PC-9 (cell line): ENCODE measurements at regions of chr5 and their contacts with region 1.

Region 1: GRCh38 chr5:59917121-59917520 is 23.6 kb upstream of the PDE4D start:
- DNase-seq: no peak
- H3K4me3 ChIP-seq: no peak overlapping the region
- H3K27ac ChIP-seq: no peak overlapping the region
- H3K4me1 ChIP-seq: no peaks in the 10 kb centered on the region
- H3K27me3 ChIP-seq: no peaks in the 10 kb centered on the region
- CTCF ChIP-seq: no peak

Region 2: DNA sequence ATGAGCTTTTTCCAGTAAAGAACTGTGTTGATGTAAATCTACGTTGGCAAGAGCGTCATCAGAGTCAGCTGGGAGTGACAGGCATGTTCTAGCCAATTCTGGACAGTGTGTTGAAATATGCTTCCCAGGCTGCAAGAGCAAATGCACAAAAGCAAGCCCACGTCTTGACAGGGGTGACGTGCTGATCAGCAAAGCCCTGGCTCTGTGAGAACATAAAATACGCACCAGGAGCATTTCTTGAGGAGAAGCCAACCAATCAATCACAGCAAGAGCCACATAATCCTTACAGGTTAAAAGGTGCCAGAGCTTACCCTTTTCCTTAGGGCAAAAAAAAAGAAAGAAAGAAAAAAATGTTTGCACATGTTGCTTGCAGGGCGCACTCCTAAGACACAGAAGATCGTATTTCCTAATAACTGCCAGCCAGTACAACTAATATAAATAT is 171.7 kb before region 1 on chr5:
- CTCF ChIA-PET with region 1: no interaction called
- POLR2A ChIA-PET with region 1: no interaction called
- intact Hi-C with region 1: no loop called
- DNase-seq: peak in 1 of 2 experiments; percentile 43
- H3K4me3 ChIP-seq: no peak overlapping the region
- H3K27ac ChIP-seq: peak overlapping the region; percentile 41; the same call in 1 of the 2 replicates
- H3K4me1 ChIP-seq: peaks cover 36% of the 10 kb centered on the region
- H3K27me3 ChIP-seq: no peaks in the 10 kb centered on the region
- CTCF ChIP-seq: no peak

Region 3: DNA sequence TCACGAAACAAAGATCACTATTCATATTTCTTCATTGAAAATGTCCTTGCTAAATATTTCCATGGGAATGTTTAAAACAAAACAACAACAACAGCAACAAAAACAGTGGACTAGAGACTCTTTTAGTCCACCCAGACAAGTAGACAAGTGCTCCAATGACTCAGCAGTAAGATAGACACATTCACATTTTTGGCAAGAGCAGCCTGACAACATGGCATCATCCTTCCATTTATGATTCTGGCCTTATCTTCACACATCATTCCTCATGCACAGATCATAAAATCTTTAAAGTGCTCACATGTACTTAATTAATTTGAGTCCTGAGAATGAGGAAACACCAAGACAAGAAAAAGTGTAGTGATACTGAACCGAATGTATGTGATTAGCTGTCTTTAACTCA is 109.0 kb after region 1 on chr5:
- CTCF ChIA-PET with region 1: no interaction called
- POLR2A ChIA-PET with region 1: no interaction called
- intact Hi-C with region 1: no loop called
- DNase-seq: no peak
- H3K4me3 ChIP-seq: no peak overlapping the region
- H3K27ac ChIP-seq: no peak overlapping the region
- H3K4me1 ChIP-seq: no peaks in the 10 kb centered on the region
- H3K27me3 ChIP-seq: no peaks in the 10 kb centered on the region
- CTCF ChIP-seq: no peak

Region 4: DNA sequence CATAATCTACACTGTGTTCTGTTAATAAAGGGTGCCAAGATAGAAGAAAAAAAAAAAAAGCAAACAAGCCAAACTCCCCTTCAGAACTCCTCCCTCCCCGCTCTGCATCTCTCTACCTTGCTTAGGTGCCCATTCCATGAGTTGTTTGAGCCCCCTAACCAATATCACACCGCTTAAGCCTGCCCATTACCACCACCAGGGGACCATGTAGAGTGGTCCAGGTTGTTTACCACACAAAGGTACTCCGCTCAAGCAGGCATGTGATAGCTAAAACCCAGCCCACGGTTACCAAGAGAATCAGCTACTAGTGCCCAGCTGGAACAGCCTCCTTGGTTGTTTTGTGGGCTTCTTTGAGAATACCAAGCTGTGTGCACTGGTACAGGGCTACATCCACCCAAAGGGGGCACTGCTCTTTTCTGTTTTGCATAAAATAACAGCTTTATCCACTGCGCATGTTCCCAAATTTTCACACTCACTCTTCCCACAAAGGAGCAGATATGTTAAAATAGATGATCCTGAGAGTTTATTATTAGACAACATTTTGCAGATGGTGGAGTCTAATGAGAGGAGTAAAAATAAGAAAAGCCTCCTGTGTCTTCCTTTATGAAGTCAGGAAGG is 478.7 kb after region 1 on chr5:
- CTCF ChIA-PET with region 1: no interaction called
- POLR2A ChIA-PET with region 1: no interaction called
- intact Hi-C with region 1: no loop called
- DNase-seq: no peak
- H3K4me3 ChIP-seq: no peak overlapping the region
- H3K27ac ChIP-seq: no peak overlapping the region
- H3K4me1 ChIP-seq: no peaks in the 10 kb centered on the region
- H3K27me3 ChIP-seq: no peaks in the 10 kb centered on the region
- CTCF ChIP-seq: no peak

Region 5: DNA sequence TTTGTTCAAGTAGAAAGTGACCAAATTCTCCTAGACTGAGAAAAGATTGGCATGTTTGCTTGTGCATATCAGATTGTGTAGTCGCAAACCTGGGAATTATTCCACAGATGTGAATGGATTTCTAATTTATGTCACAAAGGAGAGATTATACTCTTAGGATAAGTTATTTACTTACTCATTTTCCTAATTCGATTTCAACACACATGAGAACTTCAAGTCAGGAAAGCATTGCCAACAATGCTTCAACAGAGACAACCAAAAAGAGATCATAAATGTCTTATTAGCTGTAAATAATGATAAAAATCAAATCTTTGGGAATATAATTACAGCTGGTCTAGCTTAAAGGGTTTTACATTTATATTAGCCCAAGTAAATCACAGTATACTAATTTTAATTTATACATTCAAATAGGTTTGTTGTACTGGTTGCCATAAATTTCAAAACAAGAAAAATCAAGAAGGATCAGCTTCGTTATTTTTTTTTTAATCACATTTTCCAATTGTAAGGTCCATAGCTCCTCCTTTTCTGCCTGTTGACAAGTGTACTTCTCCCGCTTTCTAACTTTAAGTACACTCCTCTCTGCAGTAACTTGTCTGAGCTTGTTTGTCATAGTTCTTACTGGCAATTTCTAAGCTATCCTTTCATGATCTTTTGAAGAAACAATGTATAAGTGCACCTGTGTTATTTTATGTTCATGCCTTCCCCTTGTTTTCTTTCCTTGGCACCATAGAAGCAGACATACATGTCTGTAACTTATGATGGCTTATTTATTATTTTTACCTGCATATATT is 536.3 kb after region 1 on chr5:
- CTCF ChIA-PET with region 1: no interaction called
- POLR2A ChIA-PET with region 1: interaction called, 12 read pairs
- intact Hi-C with region 1: no loop called
- DNase-seq: no peak
- H3K4me3 ChIP-seq: no peak overlapping the region
- H3K27ac ChIP-seq: no peak overlapping the region
- H3K4me1 ChIP-seq: no peaks in the 10 kb centered on the region
- H3K27me3 ChIP-seq: no peaks in the 10 kb centered on the region
- CTCF ChIP-seq: no peak